AG04450 (cell line): ENCODE measurements at regions of chr7 and their contacts with region 1.

Region 1: GRCh38 chr7:21407796-21408480 is 19.9 kb upstream of the SP4 start:
- DNase-seq: no peak
- H3K4me3 ChIP-seq: no peak overlapping the region
- H3K27ac ChIP-seq: no peak overlapping the region
- H3K27me3 ChIP-seq: no peaks in the 10 kb centered on the region
- CTCF ChIP-seq: no peak

Region 2: GRCh38 chr7:20607216-20607615 is 800.7 kb before region 1 on chr7:
- CTCF ChIA-PET with region 1: no interaction called
- POLR2A ChIA-PET with region 1: no interaction called
- DNase-seq: no peak
- H3K4me3 ChIP-seq: no peak overlapping the region
- H3K27ac ChIP-seq: no peak overlapping the region
- H3K27me3 ChIP-seq: no peaks in the 10 kb centered on the region
- CTCF ChIP-seq: no peak

Region 3: DNA sequence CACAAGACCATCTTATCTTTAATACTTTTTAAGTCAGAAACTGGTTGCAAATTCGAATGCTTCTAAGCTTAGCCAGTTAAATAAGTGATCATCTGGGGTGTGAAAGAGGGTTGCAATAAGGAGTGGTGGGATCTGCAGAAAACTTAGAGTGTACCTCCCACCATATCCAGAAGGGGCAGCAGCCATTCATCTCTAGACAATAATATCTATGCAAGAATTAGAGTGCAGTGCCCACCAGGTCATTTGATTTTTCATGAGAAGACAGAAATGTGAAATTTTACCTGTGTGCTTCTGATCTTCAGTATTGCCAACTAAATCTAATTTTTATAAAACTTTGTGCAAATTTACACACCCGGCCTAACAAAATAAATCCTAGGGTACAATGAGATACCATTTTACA is 107.2 kb before region 1 on chr7:
- CTCF ChIA-PET with region 1: no interaction called
- POLR2A ChIA-PET with region 1: interaction called, 17 read pairs
- DNase-seq: no peak
- H3K4me3 ChIP-seq: no peak overlapping the region
- H3K27ac ChIP-seq: no peak overlapping the region
- H3K27me3 ChIP-seq: no peaks in the 10 kb centered on the region
- CTCF ChIP-seq: 0 out of 2 replicates have a peak, but pooled peaks have one; percentile 24

Region 4: DNA sequence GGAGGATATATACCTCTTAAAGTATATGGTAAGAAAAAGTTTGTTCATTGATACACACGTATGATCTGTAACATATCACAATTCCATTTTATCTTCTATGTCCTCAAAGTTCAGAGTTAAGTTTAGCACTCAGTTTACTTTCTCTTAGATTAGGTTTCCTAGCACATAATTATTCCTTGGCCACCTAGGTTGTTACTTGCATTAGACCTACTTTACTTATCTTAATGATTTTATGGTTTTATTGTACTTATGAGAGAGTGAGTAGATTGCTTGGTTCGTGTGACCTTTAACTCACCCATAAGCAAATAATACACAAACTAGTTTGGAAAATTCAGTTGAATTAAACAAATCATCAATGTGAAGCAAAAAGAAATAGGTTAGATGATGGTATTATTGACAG is 14.0 kb before region 1 on chr7:
- CTCF ChIA-PET with region 1: no interaction called
- POLR2A ChIA-PET with region 1: no interaction called
- DNase-seq: no peak
- H3K4me3 ChIP-seq: no peak overlapping the region
- H3K27ac ChIP-seq: no peak overlapping the region
- H3K27me3 ChIP-seq: no peaks in the 10 kb centered on the region
- CTCF ChIP-seq: no peak

Region 5: GRCh38 chr7:21480693-21481403 is 72.9 kb after region 1 on chr7:
- CTCF ChIA-PET with region 1: no interaction called
- POLR2A ChIA-PET with region 1: no interaction called
- DNase-seq: no peak
- H3K4me3 ChIP-seq: no peak overlapping the region
- H3K27ac ChIP-seq: no peak overlapping the region
- H3K27me3 ChIP-seq: no peaks in the 10 kb centered on the region
- CTCF ChIP-seq: no peak